ENCODE measurements at regions of chr19 and their contacts with region 1.

Region 1: GRCh38 chr19:45692187-45693105 is at the start of gene QPCTL:
- DNase-seq: peak; percentile 98
- H3K4me3 Mint-ChIP-seq: peak within 1 kb of the TSS; percentile 94
- H3K27ac Mint-ChIP-seq: peak within 1 kb of the TSS; percentile 99
- H3K4me1 Mint-ChIP-seq: peaks cover 14% of the 10 kb centered on the region
- H3K27me3 Mint-ChIP-seq: no peaks in the 10 kb centered on the region
- total RNA-seq, gene QPCTL: 24.2 and 26.7 TPM in 2 replicates

Region 2: GRCh38 chr19:45506246-45506990 is 186.0 kb before region 1 on chr19:
- intact Hi-C with region 1: loop called (anchors 5 kb)
- DNase-seq: peak; percentile 95
- H3K4me3 Mint-ChIP-seq: peak overlapping the region; percentile 93
- H3K27ac Mint-ChIP-seq: peak overlapping the region; percentile 95
- H3K4me1 Mint-ChIP-seq: peaks cover 27% of the 10 kb centered on the region
- H3K27me3 Mint-ChIP-seq: no peaks in the 10 kb centered on the region

Region 3: DNA sequence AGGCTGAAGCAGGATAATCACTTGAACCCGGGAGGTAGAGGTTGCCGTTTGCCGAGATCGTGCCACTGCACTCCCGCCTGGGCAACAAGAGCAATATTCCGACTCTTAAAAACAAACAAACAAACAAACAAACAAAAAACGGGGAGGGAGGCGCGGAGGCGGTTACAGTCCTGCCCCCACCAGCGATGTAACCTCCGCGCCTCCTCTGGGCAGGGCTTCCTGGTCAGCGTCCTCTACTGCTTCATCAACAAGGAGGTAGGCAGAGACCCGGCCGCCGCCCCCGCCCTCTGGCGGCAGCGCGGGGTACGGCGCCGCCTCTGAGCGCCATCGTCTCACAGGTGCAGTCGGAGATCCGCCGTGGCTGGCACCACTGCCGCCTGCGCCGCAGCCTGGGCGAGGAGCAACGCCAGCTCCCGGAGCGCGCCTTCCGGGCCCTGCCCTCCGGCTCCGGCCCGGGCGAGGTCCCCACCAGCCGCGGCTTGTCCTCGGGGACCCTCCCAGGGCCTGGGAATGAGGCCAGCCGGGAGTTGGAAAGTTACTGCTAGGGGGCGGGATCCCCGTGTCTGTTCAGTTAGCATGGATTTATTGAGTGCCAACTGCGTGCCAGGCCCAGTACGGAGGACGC is 10.9 kb before region 1 on chr19:
- intact Hi-C with region 1: loop called (anchors 1 kb)
- DNase-seq: peak; percentile 86
- H3K4me3 Mint-ChIP-seq: peak overlapping the region; percentile 76
- H3K27ac Mint-ChIP-seq: peak overlapping the region; percentile 72
- H3K4me1 Mint-ChIP-seq: peaks cover 16% of the 10 kb centered on the region
- H3K27me3 Mint-ChIP-seq: peaks cover 2% of the 10 kb centered on the region

Region 4: DNA sequence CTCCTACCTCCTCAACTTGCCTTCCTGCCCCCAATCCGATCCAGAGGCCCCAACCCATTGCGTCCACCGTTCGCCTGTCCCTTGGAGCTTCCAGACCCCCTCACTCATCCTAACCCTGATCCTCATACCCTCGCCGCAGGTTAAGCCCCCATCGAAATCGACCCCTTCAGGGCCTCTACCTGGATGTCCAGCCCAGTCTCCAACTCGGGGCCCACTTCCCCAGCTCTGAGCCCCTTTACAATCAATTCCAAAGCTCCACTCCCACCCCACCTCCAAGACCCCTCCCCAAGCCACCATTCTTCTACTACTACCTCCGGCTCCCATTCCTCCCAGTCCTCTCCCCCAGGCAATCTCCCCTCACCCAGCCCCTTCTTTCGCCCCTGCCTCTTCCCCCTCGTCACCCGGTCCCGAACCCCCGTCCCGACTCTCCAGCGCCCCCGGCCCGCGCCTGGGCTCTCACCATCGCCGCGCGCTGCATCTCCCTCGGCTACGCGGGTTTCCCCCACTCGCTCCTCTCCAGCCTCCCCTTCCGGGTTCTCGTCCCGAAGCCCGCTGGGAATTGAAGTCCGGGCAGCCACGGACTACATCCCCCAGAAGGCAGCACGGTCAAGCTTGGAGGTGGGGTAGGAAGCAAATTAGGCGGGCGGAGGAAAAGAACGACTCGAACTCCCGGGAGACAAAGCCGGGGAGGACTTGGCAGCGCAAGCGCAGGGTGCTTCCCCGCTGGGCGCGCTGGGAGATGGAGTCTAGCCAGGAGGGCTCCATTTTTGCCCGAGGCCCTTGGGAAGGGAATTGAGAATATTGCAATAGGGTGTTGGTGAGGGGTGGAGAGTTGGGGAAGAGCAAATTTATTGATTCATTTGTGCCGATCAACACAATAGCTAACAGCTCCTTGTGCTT is 38.2 kb after region 1 on chr19 and contains the start of gene FBXO46:
- intact Hi-C with region 1: loop called (anchors 2 kb)
- DNase-seq: peak; percentile 93
- H3K4me3 Mint-ChIP-seq: peak within 1 kb of the TSS; percentile 100
- H3K27ac Mint-ChIP-seq: peak within 1 kb of the TSS; percentile 92
- H3K4me1 Mint-ChIP-seq: peaks cover 18% of the 10 kb centered on the region
- H3K27me3 Mint-ChIP-seq: no peaks in the 10 kb centered on the region
- total RNA-seq, gene FBXO46: 34.4 and 38.9 TPM in 2 replicates

Region 5: GRCh38 chr19:45792470-45793177 is 100.2 kb after region 1 on chr19 and contains the start of gene DMWD:
- intact Hi-C with region 1: no loop called
- DNase-seq: peak; percentile 99
- H3K4me3 Mint-ChIP-seq: peak within 1 kb of the TSS; percentile 87
- H3K27ac Mint-ChIP-seq: peak within 1 kb of the TSS; percentile 72
- H3K4me1 Mint-ChIP-seq: peaks cover 27% of the 10 kb centered on the region
- H3K27me3 Mint-ChIP-seq: peaks cover 41% of the 10 kb centered on the region
- total RNA-seq, gene DMWD: 44.7 and 45.6 TPM in 2 replicates

Region 6: DNA sequence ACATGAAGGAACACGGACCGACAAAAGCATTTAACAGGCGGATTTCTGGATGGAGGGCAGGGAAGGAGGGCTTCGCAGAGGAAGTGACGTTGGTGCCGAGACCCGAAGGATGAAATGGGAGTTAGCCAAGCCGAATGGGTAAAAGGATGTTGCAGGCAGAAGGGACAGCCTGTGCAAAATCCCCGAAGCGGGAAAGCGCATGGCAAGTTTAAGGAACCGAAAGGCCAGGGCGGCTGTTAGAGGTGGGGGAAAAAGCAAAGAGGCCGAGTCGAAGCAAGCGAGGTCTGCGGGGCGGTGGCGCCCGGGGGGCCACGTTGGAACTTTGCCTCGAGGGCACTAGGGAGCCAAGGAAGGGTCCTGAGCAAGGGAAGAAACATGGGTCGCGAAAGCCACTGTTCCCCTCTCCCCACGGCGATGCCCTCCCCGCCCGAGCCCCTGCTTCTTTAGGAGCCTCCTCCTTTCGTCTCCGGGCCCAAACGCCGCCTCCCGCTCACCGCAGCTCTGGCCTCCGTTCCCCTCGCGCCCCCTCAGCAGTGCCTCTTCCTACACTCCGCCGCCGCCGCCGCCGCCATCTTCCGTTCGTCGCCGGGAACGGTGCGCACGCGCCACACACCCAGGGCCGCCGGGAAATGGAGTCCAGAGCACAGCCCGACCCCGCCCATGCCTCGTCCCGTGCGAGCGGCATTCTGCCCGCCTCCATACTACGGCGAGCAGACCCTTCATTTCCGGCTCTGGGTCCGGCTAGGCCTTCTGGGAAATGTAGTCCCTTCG is 170.3 kb after region 1 on chr19 and contains the start of gene SYMPK:
- intact Hi-C with region 1: loop called (anchors 1 kb)
- DNase-seq: peak; percentile 99
- H3K4me3 Mint-ChIP-seq: peak within 1 kb of the TSS; percentile 90
- H3K27ac Mint-ChIP-seq: peak within 1 kb of the TSS; percentile 98
- H3K4me1 Mint-ChIP-seq: peaks cover 23% of the 10 kb centered on the region
- H3K27me3 Mint-ChIP-seq: peaks cover 28% of the 10 kb centered on the region
- total RNA-seq, gene SYMPK: 121 and 131 TPM in 2 replicates

Region 7: DNA sequence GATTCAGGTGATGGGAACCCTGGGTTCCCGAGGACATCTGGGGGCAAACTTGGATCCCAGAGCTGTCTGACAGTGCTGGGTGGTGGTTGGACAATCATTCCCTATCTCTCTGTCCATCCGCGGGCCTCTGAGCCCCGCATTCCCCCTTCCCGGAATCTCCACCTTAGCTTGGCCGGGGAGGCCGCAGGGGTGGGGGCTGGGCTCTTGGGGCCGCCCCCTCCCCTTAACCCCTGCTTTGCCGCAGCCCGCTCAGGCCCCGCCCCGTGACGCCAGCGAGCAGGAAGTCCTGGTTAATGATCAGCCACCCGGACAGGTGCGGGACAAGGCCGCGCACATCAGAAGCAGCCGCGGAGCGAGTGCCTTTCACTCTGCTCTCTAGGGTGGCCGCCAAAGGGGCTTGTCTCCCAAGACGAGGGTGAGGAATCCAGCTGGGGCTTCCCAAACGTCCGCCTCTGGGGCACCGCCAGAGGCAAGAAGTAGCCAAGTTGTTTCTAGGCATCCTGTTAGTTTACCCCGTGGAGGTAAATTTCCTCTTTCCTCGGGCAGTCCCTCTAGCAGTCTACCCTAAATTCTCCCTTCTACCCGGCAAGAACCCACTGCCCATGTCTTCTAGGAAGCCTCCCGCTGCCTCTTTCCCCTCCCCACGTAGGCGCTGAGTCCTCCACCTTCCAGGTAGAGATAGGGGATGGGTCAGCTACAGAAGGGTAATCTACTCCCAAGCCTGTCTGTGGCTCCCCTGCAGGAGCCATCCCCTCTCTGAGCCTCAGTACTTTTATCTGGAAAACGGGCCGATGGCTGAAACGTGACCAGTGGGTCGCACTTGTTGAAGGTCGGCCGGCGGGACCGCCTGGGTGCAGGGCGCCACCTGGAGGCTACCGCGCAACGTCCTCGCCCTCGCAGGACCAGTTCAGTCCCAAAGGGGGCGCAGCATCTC is 190.5 kb after region 1 on chr19:
- intact Hi-C with region 1: no loop called
- DNase-seq: peak; percentile 81
- H3K4me3 Mint-ChIP-seq: peak overlapping the region; percentile 66
- H3K27ac Mint-ChIP-seq: peak overlapping the region; percentile 18
- H3K4me1 Mint-ChIP-seq: peaks cover 21% of the 10 kb centered on the region
- H3K27me3 Mint-ChIP-seq: no peaks in the 10 kb centered on the region

Measured in activated T-helper 2 cell treated with anti-CD3 and anti-CD28 coated beads, Interferon-gamma antibody, Interleukin-2, Interleukin-4, amounts not matched to agents 10 μg/mL and 5 μg/mL and 100 μg/mL, durations not matched to agents 14 hours and 24 hours and 36 hours (primary cell).